ENCODE measurements at regions of chr5 and their contacts with region 1.

Region 1: DNA sequence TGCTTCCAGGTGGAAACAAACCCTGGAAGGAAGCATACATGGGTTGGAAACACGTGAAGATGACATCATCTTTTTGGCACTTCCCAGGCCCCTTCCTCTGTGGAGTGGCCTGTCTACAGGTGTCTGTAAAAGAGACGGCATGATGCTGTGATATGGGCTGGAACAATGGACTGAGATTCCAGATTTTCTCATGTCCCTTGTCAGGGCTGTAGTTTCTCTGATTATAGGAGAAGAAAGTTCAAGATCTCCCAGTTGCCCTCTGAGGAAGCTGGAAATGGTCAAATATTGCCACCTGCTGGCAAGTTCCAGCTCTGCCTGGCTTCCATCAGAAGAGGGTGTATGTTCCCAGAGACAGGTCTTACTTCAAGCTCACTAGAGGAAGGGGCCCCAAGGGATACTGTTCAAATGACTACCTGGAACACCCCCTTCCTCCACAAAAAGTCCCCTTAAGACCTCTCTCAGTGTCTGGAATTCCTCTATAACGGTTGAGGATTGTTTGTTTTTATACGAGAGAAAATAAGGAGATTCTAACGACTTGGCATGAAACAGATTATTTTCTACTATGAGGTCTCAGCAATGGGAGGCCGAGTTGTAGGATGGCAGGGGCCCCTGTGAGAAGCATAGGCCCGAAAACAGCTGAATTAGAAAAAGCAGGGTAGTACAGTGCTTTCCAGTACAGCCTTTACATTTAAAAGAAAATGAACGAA is 7.3 kb upstream of the ANXA6 start:
- DNase-seq: peak; percentile 91
- H3K4me3 Mint-ChIP-seq: no peak overlapping the region
- H3K27ac Mint-ChIP-seq: no peak overlapping the region
- H3K4me1 Mint-ChIP-seq: no peaks in the 10 kb centered on the region
- H3K27me3 Mint-ChIP-seq: peaks cover 15% of the 10 kb centered on the region
- CTCF ChIP-seq: peak; percentile 96

Region 2: DNA sequence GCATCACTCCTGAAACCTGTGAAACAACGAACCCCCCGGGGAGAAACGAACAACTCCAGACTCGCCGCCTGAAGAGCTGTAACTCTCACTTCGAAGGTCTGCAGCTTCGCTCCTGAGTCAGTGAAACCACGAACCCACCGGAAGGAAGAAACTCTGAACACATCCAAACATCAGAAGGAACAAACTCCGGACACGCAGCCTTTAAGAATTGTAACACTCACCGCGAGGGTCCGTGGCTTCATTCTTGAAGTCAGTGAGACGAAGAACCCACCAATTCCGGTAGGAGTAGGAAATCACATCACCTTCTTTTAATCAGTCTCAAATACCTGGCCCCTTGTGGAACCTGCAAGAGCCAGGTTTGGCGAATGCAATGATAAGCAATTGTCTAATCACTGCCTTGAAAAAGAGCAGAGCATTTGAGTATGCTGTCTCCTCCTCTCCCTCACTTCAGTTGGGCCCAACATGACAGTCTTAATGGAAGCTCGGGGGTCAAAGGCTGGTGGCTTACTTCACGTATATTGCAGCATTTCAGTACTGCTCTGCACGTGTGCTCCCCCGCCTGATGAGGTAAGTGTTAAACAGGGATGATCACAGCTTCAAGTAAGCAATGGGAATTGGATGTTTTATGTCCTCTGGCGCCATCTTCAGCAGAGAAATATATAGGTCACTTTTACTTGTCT is 318.0 kb before region 1 on chr5:
- CTCF ChIA-PET with region 1: interaction called, 7 read pairs
- POLR2A ChIA-PET with region 1: no interaction called
- intact Hi-C with region 1: loop called (anchors 10 kb)
- DNase-seq: peak; percentile 92
- H3K4me3 Mint-ChIP-seq: no peak overlapping the region
- H3K27ac Mint-ChIP-seq: no peak overlapping the region
- H3K4me1 Mint-ChIP-seq: no peaks in the 10 kb centered on the region
- H3K27me3 Mint-ChIP-seq: no peaks in the 10 kb centered on the region
- CTCF ChIP-seq: peak; percentile 85

Region 3: DNA sequence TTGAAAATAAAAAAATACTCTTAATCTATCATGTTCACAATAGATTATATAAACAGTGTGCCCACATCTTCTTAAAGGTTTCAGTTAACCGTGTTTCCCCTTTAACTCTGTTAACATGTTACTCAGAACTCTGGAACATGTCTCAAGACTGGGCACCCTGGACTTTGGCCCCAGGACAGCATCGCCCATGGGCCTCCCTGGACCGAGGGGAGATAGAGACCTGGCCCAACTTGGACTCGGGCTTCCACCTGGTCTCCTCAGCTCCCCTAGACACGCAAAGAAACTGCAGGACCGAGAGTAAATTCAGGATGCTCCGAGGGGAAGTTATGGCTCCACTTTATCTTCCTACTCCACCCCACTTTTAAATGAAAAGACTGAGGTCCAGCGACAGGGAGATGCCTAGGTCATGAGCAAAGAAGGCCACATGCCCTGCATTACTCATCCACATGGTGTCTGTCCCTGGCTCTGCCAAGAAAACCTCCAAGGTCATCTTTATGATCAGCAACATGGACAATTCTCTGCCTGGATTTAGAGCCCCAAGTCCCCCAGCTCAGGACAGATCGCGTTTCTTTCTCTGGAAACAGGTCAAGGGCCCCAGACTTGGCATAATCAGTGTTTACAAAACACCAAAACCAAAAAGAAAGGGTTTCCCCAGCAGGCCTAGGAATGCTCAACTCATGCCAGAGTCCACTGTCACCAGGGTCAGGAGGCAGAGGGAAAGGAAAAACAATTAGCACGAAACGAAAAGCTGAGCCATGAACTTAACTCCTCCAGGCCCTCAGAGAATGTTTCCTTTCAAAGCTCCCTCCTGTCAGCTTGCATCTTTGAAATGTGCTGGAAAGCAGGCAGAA is 127.1 kb before region 1 on chr5:
- CTCF ChIA-PET with region 1: interaction called, 14 read pairs
- POLR2A ChIA-PET with region 1: no interaction called
- intact Hi-C with region 1: no loop called
- DNase-seq: no peak
- H3K4me3 Mint-ChIP-seq: no peak overlapping the region
- H3K27ac Mint-ChIP-seq: peak overlapping the region; percentile 75
- H3K4me1 Mint-ChIP-seq: peaks cover 7% of the 10 kb centered on the region
- H3K27me3 Mint-ChIP-seq: no peaks in the 10 kb centered on the region
- CTCF ChIP-seq: no peak

Region 4: GRCh38 chr5:151141535-151141934 is 23.3 kb before region 1 on chr5:
- CTCF ChIA-PET with region 1: interaction called, 745 read pairs
- POLR2A ChIA-PET with region 1: no interaction called
- intact Hi-C with region 1: no loop called
- DNase-seq: no peak
- H3K4me3 Mint-ChIP-seq: no peak overlapping the region
- H3K27ac Mint-ChIP-seq: no peak overlapping the region
- H3K4me1 Mint-ChIP-seq: peaks cover 7% of the 10 kb centered on the region
- H3K27me3 Mint-ChIP-seq: no peaks in the 10 kb centered on the region
- CTCF ChIP-seq: no peak

Region 5: GRCh38 chr5:151213800-151214613 is 49.2 kb after region 1 on chr5:
- CTCF ChIA-PET with region 1: interaction called, 10 read pairs
- POLR2A ChIA-PET with region 1: no interaction called
- intact Hi-C with region 1: no loop called
- DNase-seq: peak; percentile 87
- H3K4me3 Mint-ChIP-seq: no peak overlapping the region
- H3K27ac Mint-ChIP-seq: peak overlapping the region; percentile 18
- H3K4me1 Mint-ChIP-seq: peaks cover 3% of the 10 kb centered on the region
- H3K27me3 Mint-ChIP-seq: no peaks in the 10 kb centered on the region
- CTCF ChIP-seq: no peak

Region 6: DNA sequence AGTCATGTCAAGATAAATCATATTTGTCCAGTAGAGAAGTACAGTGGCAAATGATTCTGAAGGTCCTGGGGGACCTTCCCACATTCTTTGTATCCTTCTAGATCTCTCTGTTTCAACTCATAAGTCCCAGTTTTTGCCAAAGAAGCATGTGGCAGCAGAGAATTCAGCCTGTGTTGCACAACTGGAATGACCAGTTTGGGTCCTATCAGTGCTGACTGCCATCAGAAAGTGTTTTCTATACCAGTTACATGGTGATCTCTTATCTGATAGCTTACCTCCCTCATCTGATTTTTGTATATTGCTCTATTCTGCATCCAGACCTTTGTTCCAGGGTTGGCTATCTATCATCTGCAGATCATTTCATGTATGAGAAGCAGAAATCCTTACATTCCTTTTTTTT is 109.8 kb after region 1 on chr5:
- CTCF ChIA-PET with region 1: no interaction called
- POLR2A ChIA-PET with region 1: no interaction called
- intact Hi-C with region 1: no loop called
- DNase-seq: no peak
- H3K4me3 Mint-ChIP-seq: no peak overlapping the region
- H3K27ac Mint-ChIP-seq: no peak overlapping the region
- H3K4me1 Mint-ChIP-seq: no peaks in the 10 kb centered on the region
- H3K27me3 Mint-ChIP-seq: no peaks in the 10 kb centered on the region
- CTCF ChIP-seq: no peak

Measured in MCF 10A (cell line).